Activated CD8-positive, alpha-beta T cell treated with anti-CD3 and anti-CD28 coated beads, Interleukin-2, amount 10 ng/mL, durations not matched to agents 7 days and 5 days (primary cell): ENCODE measurements at regions of chr9 and their contacts with region 1.

Region 1: GRCh38 chr9:121686930-121687541 is 35.6 kb downstream of the DAB2IP start:
- DNase-seq: peak; percentile 84
- ATAC-seq: peak; percentile 88
- H3K4me3 Mint-ChIP-seq: no peak overlapping the region
- H3K27ac Mint-ChIP-seq: no peak overlapping the region
- H3K4me1 Mint-ChIP-seq: no peaks in the 10 kb centered on the region
- H3K27me3 Mint-ChIP-seq: peaks cover 12% of the 10 kb centered on the region

Region 2: DNA sequence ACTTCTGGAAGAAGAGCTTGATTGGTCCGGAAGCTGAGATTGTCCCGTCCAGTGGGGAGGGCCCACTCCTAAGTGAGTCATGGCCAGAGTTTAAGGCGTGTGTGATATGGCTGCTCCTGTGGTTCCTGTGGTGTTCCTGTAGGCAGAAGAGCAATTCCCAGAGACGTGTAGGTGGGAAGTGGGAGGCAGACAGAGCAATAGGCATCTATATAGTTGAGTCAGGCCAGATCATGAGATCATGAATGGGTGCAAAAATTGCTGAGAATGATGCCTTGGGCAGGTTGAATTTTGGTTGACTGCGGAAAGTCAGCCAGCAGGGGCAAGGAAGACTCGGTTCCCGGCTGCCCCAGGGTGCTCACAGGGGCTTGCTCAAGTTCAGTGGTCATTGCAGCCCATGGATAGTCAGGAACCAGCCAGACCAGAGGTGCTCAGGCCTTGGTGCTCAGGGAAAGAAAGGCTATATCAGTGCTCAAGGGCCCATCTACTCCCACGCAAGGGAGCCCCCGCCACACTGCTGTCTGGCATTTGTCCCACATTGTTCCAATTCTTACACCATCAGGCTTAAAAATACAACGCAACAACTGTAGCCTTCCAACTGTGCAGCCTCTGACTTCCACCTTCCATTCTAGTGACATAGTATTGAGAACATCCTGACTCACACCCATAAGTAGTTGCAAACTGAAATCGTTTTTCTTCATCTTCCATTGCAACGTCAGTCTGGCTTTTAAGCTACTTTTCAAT is 440.0 kb before region 1 on chr9:
- CTCF ChIA-PET with region 1: no interaction called
- POLR2A ChIA-PET with region 1: no interaction called
- DNase-seq: no peak
- ATAC-seq: no peak
- H3K4me3 Mint-ChIP-seq: no peak overlapping the region
- H3K27ac Mint-ChIP-seq: no peak overlapping the region
- H3K4me1 Mint-ChIP-seq: no peaks in the 10 kb centered on the region
- H3K27me3 Mint-ChIP-seq: no peaks in the 10 kb centered on the region

Region 3: DNA sequence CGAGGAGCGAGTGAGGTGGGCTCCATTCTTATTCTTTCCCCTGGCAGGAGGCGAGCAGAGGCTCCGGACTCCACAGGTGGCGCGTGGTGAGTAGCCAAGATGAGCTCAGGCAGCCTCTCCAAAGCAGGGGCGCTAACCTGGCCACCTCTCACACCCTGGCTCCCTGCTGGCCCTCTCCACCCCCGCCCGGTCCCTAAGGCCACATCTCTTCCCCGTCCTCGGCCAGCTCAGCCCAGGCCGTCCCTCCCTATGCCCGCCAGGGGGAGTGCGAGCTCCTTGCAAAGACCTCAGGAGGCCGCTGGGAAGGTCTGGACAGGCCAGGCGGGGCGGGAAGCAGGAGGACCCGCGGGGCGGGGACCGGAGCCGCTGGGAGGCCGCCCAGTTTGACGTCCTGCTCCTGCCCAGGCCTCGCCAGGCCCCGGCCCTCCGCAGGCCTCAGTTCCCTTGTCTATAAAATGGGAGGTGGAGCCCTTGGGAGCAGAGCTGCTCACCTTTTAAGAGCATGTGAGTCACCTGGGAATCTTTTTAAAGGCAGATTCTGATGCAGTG is 141.1 kb before region 1 on chr9:
- CTCF ChIA-PET with region 1: interaction called, 28 read pairs
- POLR2A ChIA-PET with region 1: no interaction called
- DNase-seq: peak; percentile 81
- ATAC-seq: peak; percentile 94
- H3K4me3 Mint-ChIP-seq: no peak overlapping the region
- H3K27ac Mint-ChIP-seq: no peak overlapping the region
- H3K4me1 Mint-ChIP-seq: no peaks in the 10 kb centered on the region
- H3K27me3 Mint-ChIP-seq: peaks cover 19% of the 10 kb centered on the region

Region 4: DNA sequence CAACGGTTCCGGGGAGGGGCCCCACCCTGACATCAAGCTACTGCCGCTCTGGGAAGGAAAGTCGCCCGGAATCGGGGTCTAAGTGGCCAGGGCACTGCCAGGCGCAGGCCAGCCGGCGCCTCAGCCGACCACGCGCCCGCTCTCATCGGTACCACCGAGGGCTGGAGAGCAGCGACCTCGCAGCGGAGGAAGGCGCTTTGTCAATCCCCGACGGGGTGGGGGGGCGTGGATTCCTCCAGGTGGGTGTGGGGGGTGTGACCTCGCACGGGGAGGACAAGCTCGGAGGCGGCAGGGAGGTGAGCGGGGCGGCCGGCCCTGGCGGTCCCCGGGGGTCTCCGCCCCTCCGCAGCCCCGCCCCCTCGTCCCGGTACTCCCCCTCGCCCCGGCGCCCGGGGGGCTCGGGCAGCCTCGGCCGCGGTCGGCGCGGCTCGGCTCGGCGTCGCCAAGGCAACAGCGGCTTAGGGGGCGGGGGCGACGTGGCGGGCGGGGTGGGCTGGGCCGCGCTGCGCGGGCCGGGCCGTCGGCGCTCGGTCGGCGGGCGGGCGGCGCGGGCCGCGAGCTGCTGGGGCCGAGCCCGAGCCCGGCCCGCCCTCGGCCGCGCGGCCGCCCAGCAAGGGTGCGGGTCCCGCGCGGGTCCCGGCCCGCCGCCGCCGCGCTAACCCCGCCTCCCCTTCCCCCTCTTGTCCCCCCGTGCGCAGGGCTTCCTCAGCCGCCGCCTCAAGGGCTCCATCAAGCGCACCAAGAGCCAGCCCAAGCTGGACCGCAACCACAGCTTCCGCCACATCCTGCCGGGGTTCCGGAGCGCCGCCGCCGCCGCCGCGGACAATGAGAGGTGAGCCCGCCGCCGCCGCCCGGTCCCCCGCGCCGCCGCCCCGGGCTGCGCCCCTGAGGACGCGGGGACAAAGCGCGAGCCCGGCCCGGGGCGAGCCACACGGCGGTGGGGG is 11.9 kb after region 1 on chr9:
- CTCF ChIA-PET with region 1: interaction called, 16 read pairs
- POLR2A ChIA-PET with region 1: no interaction called
- DNase-seq: peak; percentile 83
- ATAC-seq: peak; percentile 75
- H3K4me3 Mint-ChIP-seq: peak overlapping the region; percentile 18
- H3K27ac Mint-ChIP-seq: no peak overlapping the region
- H3K4me1 Mint-ChIP-seq: peaks cover 14% of the 10 kb centered on the region
- H3K27me3 Mint-ChIP-seq: peaks cover 50% of the 10 kb centered on the region

Region 5: DNA sequence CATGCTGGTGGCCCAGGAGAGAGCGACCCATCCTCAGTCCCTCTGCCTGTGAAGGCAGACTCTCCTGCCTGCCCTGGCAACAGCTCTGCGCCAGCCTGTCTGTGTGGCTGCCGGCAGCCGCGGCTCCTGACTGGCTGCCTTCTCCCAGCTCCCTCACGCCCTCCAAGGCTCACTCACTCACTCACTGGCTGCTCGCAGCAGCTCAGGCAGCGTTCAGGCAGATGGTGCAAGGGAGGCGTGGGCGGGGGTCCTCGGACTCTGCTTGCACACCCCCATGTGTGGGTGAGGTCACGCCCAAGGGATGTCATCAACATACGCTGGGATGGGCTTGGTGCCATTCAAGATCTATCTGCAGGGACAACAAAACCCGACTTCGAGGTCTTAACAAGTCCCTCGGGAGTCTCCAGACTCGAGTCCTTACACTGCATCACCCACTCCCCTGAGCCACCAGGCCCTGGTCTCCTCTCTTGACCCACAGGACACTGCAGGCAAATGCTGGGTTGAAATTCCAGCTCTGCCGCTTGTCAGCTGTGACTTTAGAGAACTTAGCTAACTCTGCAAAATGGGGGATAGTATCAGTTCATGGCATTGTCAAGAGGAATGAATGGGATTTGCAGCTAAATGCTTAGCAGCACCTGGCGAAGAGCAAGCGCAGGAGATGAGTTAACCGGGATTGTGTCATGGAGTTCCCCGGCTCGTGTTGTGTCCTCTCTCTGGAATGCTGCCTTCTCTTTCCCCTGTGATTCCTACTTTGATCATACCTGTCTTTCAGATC is 31.2 kb after region 1 on chr9:
- CTCF ChIA-PET with region 1: no interaction called
- POLR2A ChIA-PET with region 1: no interaction called
- DNase-seq: no peak
- ATAC-seq: no peak
- H3K4me3 Mint-ChIP-seq: no peak overlapping the region
- H3K27ac Mint-ChIP-seq: no peak overlapping the region
- H3K4me1 Mint-ChIP-seq: no peaks in the 10 kb centered on the region
- H3K27me3 Mint-ChIP-seq: no peaks in the 10 kb centered on the region

Region 6: GRCh38 chr9:121735065-121735789 is 48.2 kb after region 1 on chr9:
- CTCF ChIA-PET with region 1: interaction called, 10 read pairs
- POLR2A ChIA-PET with region 1: no interaction called
- DNase-seq: peak; percentile 30
- ATAC-seq: peak; percentile 40
- H3K4me3 Mint-ChIP-seq: no peak overlapping the region
- H3K27ac Mint-ChIP-seq: no peak overlapping the region
- H3K4me1 Mint-ChIP-seq: peaks cover 30% of the 10 kb centered on the region
- H3K27me3 Mint-ChIP-seq: peaks cover 35% of the 10 kb centered on the region

Region 7: DNA sequence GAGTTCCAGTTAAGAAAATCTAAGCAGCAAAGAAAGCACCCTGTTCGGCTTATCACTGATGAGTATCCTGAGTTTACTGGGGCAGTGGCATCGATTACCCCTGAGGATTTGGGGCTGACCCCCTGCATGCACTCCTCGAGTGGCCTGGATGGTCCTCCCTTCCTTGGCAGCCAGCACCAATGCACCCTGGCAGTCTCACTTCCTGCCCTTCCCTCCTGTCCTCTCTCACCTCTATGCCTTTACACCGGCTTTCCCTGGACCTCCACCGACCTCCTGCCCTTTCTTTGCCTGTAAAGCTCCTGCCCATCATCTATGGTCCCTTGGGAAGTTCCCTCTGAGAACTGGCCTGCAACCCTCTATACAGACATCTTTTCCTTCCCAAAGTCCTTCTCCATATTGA is 309.0 kb after region 1 on chr9:
- CTCF ChIA-PET with region 1: interaction called, 11 read pairs
- POLR2A ChIA-PET with region 1: no interaction called
- DNase-seq: no peak
- ATAC-seq: no peak
- H3K4me3 Mint-ChIP-seq: no peak overlapping the region
- H3K27ac Mint-ChIP-seq: no peak overlapping the region
- H3K4me1 Mint-ChIP-seq: no peaks in the 10 kb centered on the region
- H3K27me3 Mint-ChIP-seq: no peaks in the 10 kb centered on the region